ENCODE measurements at regions of chr1 and their contacts with region 1.

Region 1: GRCh38 chr1:117181630-117182041 is 29.1 kb downstream of the VTCN1 start:
- DNase-seq: no peak
- H3K4me3 Mint-ChIP-seq: no peak overlapping the region
- H3K27ac Mint-ChIP-seq: no peak overlapping the region
- H3K4me1 Mint-ChIP-seq: no peaks in the 10 kb centered on the region
- H3K27me3 Mint-ChIP-seq: peaks cover 1% of the 10 kb centered on the region

Region 2: DNA sequence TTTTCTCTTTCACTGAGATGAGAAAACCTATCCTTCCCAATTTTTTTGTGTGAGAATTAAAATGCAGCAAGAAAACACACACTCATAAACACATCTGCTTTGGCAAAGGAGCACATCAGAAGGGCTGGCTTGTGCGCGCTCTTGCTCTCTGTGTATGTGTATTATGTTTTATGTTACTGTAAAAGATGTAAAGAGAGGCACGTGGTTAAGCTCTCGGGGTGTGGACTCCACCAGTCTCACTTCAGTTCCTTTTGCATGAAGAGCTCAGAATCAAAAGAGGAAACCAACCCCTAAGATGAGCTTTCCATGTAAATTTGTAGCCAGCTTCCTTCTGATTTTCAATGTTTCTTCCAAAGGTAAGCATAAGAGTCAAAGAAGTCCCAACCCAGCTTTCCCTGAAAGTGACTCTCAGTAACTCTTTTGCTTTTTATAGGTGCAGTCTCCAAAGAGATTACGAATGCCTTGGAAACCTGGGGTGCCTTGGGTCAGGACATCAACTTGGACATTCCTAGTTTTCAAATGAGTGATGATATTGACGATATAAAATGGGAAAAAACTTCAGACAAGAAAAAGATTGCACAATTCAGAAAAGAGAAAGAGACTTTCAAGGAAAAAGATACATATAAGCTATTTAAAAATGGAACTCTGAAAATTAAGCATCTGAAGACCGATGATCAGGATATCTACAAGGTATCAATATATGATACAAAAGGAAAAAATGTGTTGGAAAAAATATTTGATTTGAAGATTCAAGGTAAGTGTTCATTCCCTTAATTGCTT is 427.2 kb before region 1 on chr1 and contains the start of gene CD2:
- intact Hi-C with region 1: no loop called
- DNase-seq: peak; percentile 61
- H3K4me3 Mint-ChIP-seq: peak within 1 kb of the TSS; percentile 97
- H3K27ac Mint-ChIP-seq: peak within 1 kb of the TSS; percentile 97
- H3K4me1 Mint-ChIP-seq: peaks cover 46% of the 10 kb centered on the region
- H3K27me3 Mint-ChIP-seq: no peaks in the 10 kb centered on the region
- total RNA-seq, gene CD2: 651 and 685 TPM in 2 replicates

Region 3: DNA sequence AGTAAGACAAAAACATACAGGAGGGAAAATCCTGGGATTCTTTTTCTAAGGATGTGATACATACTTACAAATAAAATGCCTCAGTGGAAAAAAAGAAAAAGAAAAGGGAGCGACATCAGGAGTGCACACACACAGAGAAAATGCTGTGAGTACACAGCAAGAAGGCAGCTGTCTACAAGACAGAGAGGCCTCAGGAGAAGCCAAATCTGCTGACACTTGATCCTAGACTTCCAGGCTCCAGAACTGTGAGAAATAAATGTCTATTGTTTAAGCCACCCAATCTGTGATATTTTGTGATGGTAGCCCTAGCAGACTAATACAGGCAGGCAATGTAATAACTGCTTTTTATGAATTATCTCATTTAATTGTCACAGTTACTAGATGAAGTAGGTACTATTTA is 43.1 kb before region 1 on chr1:
- intact Hi-C with region 1: loop called (anchors 1 kb)
- DNase-seq: no peak
- H3K4me3 Mint-ChIP-seq: no peak overlapping the region
- H3K27ac Mint-ChIP-seq: no peak overlapping the region
- H3K4me1 Mint-ChIP-seq: no peaks in the 10 kb centered on the region
- H3K27me3 Mint-ChIP-seq: peaks cover 8% of the 10 kb centered on the region